Dendritic cell treated with granulocyte-macrophage colony-stimulating factor and Interleukin-4, amounts not matched to agents 40 ng/mL and 50 ng/mL, for 4 days (primary cell): ENCODE measurements at regions of chr9 and their contacts with region 1.

Region 1: DNA sequence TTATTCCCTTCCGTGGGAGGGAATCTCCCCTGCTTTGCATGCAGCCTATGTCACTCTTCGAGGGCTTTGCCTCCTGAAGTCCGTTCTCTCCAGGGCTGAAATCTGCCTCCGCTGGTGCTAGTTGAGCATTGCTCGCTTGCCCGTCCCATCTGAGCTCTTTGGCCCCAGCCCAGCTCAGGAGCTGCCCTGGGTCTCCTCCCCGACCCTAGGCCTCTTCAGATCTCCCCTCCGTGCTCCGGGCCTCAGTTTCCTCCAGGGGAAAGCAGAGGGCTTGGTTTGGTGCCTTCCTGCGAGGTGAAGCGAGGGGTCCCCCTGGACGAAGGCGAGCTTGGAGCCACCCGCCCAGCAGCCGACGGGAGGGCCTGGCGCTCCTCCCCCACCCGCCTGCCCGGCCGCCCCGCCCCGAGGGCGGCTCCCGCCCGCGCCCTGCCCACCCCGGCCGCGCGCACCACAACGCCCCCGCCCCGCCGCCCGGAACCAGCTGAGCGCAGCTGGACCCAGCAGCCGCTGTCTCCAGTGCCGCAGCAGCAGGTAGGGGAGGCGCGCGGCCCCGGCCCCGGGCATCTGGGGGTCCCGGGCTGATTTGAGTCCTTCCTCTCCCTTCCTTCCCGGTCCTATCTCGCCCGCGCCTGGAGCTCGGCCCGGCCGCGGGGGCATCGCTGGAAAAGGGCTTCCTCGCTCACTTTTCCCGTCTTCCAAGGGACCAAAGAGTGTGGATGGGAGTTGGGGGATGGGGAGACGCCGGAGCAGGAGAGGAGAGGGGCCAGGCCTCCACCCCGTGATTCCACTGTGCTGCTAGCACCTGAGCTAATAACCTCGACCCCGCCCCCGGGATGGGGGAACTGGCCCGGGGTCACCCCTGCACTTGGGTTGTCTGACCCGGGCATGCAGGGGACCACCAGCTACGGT is at the start of gene GSN:
- H3K4me3 Mint-ChIP-seq: peak within 1 kb of the TSS; percentile 97
- H3K27ac Mint-ChIP-seq: peak within 1 kb of the TSS; percentile 94
- H3K4me1 Mint-ChIP-seq: peaks cover 78% of the 10 kb centered on the region
- H3K27me3 Mint-ChIP-seq: no peaks in the 10 kb centered on the region

Region 2: GRCh38 chr9:121281561-121282310 is 13.8 kb after region 1 on chr9:
- intact Hi-C with region 1: loop called (anchors 2 kb)
- H3K4me3 Mint-ChIP-seq: peak overlapping the region; percentile 61
- H3K27ac Mint-ChIP-seq: peak overlapping the region; percentile 98
- H3K4me1 Mint-ChIP-seq: peaks cover 95% of the 10 kb centered on the region
- H3K27me3 Mint-ChIP-seq: no peaks in the 10 kb centered on the region